ENCODE measurements at regions of chr1 and their contacts with region 1.

Region 1: DNA sequence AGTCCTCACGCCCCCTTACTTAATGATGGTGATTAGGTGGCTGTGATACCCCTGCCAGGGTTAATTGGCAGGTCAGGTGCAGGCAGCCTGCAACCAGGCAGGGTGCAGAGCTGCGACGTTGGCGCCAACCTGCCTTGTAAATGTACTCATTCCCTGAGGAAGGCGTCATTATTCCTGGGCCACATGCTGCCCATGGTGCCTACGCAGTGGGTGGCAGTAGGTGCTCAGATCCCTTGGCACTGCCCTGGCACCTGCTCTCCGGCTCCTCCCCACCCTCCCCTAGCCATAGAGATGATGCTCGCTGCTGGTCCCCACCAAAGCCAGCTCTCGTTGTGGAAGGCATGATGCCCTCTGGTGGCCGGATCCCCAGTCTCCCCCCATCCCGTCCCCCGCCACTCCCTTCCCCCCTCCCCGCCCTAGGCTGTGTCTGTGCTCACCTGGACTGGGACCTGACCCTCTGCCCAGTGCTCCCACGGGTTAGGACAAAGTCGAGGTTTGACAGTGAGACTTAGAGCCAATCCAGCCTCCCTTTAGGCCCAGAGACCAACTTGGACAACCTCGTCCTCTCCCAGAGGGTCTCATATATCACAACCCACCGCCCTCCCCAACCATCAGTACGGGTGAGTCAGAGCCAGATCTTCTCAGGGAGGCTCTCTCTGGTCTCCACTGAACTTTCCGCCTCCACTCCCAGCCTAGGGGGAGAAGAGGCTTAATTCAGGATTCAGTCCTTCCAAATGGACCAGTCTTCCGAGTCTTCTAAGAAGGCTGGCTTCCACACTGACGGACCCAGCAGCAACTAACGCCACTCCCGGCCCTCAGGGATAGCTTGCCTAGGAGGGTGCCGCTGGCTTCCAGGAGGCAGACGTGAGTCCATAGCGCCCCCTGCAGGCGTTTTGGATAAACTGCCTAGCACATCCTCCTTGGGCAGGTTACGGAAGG is 5.7 kb downstream of the KRTCAP2 start:
- DNase-seq: no peak
- H3K4me3 ChIP-seq: no peak overlapping the region
- H3K27me3 ChIP-seq: peaks cover 4% of the 10 kb centered on the region; the same call in 1 of the 2 replicates
- CTCF ChIP-seq: peak; percentile 90

Region 2: DNA sequence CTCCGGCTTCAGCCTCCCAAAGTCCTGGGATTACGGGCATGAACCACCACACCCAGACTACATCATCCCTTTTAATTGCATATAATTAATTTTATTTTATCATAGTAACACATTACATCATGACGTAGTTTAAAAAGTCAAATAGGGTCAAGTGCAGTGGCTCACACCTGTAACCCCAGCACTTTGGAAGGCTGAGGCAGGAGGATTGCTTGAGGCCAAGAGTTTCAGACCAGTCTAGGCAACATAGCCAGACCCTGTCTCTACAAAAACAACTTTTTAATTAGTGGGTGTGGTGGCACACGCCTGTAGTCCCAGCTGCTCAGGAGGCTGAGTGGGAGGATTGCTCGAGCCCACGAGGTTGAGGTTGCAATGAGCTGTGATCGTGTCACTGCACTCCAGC is 68.1 kb before region 1 on chr1:
- CTCF ChIA-PET with region 1: interaction called, 27 read pairs
- POLR2A ChIA-PET with region 1: no interaction called
- DNase-seq: no peak
- H3K4me3 ChIP-seq: no peak overlapping the region
- H3K27me3 ChIP-seq: peaks cover 4% of the 10 kb centered on the region; the same call in 1 of the 2 replicates
- CTCF ChIP-seq: no peak

Region 3: GRCh38 chr1:155135415-155136028 is 31.9 kb before region 1 on chr1 and contains the start of gene SLC50A1:
- CTCF ChIA-PET with region 1: interaction called, 19 read pairs
- POLR2A ChIA-PET with region 1: no interaction called
- DNase-seq: peak; percentile 73
- H3K4me3 ChIP-seq: peak within 1 kb of the TSS; percentile 82
- H3K27me3 ChIP-seq: no peaks in the 10 kb centered on the region
- CTCF ChIP-seq: no peak
- polyA plus RNA-seq, gene SLC50A1: 39.5 and 47.4 TPM in 2 replicates

Region 4: GRCh38 chr1:155145491-155145890 is 21.9 kb before region 1 on chr1:
- CTCF ChIA-PET with region 1: interaction called, 15 read pairs
- POLR2A ChIA-PET with region 1: no interaction called
- DNase-seq: no peak
- H3K4me3 ChIP-seq: no peak overlapping the region
- H3K27me3 ChIP-seq: peaks cover 1% of the 10 kb centered on the region; the same call in 1 of the 2 replicates
- CTCF ChIP-seq: no peak

Measured in BJ (cell line).